ENCODE measurements at regions of chr13 and their contacts with region 1.

Region 1: GRCh38 chr13:97116754-97117153 is 105.4 kb upstream of the MBNL2 start:
- DNase-seq: peak; percentile 69
- H3K4me3 ChIP-seq: no peak overlapping the region
- H3K27ac ChIP-seq: no peak overlapping the region
- H3K4me1 ChIP-seq: peaks cover 31% of the 10 kb centered on the region
- H3K27me3 ChIP-seq: no peaks in the 10 kb centered on the region
- CTCF ChIP-seq: no peak
- POLR2A ChIP-seq: no peak

Region 2: GRCh38 chr13:97194479-97194878 is 77.7 kb after region 1 on chr13:
- CTCF ChIA-PET with region 1: interaction called, 4 read pairs
- POLR2A ChIA-PET with region 1: no interaction called
- dilution Hi-C with region 1: no loop called
- intact Hi-C with region 1: loop called (anchors 1 kb)
- DNase-seq: peak; percentile 90
- H3K4me3 ChIP-seq: no peak overlapping the region
- H3K27ac ChIP-seq: peak overlapping the region; percentile 28
- H3K4me1 ChIP-seq: peaks cover 26% of the 10 kb centered on the region
- H3K27me3 ChIP-seq: no peaks in the 10 kb centered on the region
- CTCF ChIP-seq: no peak
- POLR2A ChIP-seq: no peak

Region 3: DNA sequence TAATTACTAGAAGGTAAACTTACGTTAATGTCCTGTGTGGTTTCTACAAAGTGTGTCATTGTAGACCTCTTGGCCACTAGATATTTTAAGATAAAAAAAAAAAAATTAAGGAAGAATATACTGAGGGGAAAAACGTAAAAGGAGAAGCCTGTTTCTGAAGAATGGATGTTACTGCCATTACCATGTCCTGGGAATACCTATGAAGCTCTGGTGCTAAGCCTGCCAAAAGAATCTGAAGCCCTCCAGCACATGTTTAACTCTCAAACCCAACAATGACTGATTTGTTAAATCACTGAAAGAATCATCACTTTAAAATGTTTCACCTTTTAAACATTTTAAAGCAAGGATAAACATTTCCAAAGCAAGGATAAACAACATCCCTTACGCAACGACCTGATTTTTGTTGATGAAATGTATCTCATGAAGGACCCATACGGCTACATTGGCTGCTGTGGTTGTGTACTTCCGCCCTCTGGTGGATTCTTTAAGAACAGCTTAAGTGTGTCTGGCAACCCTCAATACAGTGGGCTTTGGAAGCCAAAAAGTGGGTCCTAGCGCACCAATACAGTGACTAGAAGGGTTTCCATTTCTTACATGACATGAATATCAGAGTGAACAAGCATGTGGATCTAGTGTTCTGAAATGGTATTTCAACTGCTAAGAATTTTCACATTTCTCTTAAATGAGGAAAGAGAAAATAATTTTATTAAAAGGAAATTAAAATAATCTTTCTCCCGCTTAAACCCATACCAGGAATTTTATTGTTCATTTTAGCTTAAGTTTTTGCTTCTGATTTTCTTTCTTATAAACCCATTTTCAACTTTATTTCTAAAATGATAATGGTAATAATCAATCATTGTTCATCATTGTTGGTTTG is 242.7 kb after region 1 on chr13:
- CTCF ChIA-PET with region 1: interaction called, 138 read pairs
- POLR2A ChIA-PET with region 1: no interaction called
- dilution Hi-C with region 1: no loop called
- intact Hi-C with region 1: loop called (anchors 1 kb)
- DNase-seq: peak; percentile 81
- H3K4me3 ChIP-seq: no peak overlapping the region
- H3K27ac ChIP-seq: peak overlapping the region; percentile 20
- H3K4me1 ChIP-seq: no peaks in the 10 kb centered on the region
- H3K27me3 ChIP-seq: no peaks in the 10 kb centered on the region
- CTCF ChIP-seq: peak; percentile 66 to 80
- POLR2A ChIP-seq: no peak

Measured in endothelial cell of umbilical vein (primary cell).